ENCODE measurements at regions of chr21 and their contacts with region 1.

Region 1: DNA sequence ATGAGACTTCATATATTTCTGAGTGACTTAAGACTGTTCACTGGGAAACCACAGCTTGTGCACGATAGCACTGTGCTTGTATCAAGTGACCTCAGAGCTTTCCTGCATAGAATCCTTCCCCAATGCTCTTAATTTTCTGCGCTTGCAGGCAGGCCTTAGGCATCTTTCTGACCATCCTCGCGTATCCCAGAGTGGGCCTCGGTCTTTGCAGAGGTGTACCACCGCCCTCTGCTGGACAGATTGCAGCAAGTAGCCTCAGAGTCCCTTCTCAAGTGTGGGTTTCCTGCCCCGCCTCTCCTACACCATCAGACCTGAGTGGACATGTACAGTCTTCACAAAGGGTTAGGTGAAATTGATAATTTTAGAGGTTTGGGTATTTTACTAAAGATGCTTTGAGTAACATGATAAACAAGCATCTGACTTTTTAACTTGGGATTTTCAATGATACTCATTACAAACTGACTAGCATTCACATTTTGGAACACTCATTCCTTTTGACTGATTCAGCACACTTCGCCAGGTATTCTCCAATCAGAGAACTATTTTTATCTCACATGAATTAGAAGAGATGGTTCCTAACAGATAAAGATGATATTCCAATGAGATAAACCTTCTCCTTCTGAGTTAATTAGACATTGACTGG is 246.5 kb upstream of the USP25 start:
- DNase-seq: peak; percentile 88
- H3K4me3 Mint-ChIP-seq: no peak overlapping the region
- H3K27ac Mint-ChIP-seq: no peak overlapping the region
- H3K4me1 Mint-ChIP-seq: no peaks in the 10 kb centered on the region
- H3K27me3 Mint-ChIP-seq: no peaks in the 10 kb centered on the region
- CTCF ChIP-seq: peak; percentile 96

Region 2: DNA sequence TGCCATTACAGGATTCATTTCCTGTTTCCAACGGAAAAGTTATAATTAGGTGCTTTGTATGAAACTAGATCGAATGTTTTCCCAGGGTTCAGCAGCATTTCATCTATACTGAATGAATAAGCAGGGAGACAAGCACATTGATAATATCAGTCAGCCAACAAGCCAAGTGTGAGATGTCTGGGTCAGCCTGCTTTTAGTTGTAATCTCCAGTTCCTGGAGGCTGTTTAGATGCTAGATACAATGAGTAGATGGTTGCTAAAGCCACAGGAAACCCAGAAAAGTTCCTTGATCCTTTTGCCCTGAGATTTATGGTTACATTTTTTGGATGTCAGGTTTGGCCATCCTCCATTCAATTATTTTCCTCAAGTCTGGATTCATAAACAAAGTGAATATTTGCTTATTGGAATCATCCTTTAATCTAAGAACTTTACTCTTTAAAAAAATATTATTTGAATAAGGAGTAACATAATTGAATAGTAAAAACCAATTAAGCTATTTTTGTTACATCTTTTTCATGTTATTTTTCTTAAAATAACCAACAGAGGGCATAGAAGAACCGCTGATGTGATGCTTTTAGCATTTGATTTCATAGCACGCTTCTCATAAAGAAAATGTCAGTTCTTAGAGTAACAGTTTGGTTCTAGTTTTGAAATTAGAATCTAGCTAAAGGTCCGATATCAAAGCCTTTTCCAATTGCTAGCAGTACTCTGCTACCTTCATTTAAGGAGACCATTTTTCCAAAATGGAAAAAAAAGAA is 1176.9 kb before region 1 on chr21:
- CTCF ChIA-PET with region 1: interaction called, 4 read pairs
- POLR2A ChIA-PET with region 1: interaction called, 3 read pairs
- intact Hi-C with region 1: loop called (anchors 10 kb)
- DNase-seq: peak; percentile 46
- H3K4me3 Mint-ChIP-seq: no peak overlapping the region
- H3K27ac Mint-ChIP-seq: no peak overlapping the region
- H3K4me1 Mint-ChIP-seq: peaks cover 8% of the 10 kb centered on the region
- H3K27me3 Mint-ChIP-seq: no peaks in the 10 kb centered on the region
- CTCF ChIP-seq: peak; percentile 55

Region 3: DNA sequence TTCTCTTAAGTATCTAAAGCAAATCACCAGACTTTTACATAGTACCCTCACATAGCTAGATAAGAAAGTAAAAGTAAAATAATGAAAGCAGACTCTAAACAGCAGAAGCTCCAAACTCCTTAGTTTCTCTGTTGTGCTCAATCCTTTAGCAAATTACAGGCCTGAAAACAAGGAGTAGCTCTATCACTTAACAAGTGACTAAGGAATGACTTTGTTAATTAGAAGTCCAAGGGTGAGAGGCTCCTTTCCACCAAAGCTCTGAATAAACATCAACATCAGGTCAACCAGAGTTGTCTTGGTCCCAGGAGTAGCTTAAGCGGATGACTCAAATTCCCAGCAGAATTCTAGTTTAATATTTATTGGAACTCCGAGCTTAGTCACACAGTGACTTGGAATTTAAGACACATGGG is 424.4 kb before region 1 on chr21:
- CTCF ChIA-PET with region 1: interaction called, 12 read pairs
- POLR2A ChIA-PET with region 1: interaction called, 13 read pairs
- intact Hi-C with region 1: loop called (anchors 1 kb)
- DNase-seq: peak; percentile 47
- H3K4me3 Mint-ChIP-seq: peak overlapping the region; percentile 7
- H3K27ac Mint-ChIP-seq: no peak overlapping the region
- H3K4me1 Mint-ChIP-seq: peaks cover 45% of the 10 kb centered on the region
- H3K27me3 Mint-ChIP-seq: no peaks in the 10 kb centered on the region
- CTCF ChIP-seq: no peak

Region 4: DNA sequence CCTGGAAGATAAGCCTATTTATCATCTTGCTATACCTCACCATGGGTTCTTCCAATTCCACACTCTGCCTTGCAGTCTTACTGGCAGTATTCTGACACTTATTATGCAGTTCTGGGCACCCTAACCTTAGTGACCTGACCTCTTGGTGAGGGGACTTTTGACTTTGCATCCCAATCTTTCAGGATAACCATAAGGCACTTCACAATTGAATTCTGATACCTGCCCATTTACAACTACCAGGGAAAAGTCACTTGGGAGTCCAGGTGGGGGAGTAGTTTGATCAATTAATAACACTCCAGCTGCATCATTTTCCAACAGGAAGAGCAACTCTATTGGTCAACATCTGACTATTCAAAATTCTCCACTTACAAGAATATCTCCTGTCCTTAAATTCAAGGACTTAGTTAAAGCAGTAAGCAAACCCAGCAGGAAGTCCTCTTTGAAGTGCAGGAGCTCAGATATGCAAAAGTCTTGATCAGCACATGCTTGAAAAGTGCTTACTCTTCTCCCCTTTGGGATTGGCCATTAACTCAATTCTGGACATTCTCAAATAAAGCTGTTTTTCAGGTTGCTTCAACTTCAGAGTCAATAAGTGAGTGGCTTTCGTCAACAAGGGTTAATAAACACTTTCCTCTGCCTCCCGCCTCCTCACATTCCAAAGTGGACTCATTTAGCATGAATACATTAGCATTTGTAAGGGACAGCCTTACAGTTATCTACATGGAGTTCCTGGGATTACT is 241.1 kb before region 1 on chr21:
- CTCF ChIA-PET with region 1: interaction called, 15 read pairs
- POLR2A ChIA-PET with region 1: no interaction called
- intact Hi-C with region 1: loop called (anchors 1 kb)
- DNase-seq: peak; percentile 21
- H3K4me3 Mint-ChIP-seq: no peak overlapping the region
- H3K27ac Mint-ChIP-seq: no peak overlapping the region
- H3K4me1 Mint-ChIP-seq: peaks cover 11% of the 10 kb centered on the region
- H3K27me3 Mint-ChIP-seq: no peaks in the 10 kb centered on the region
- CTCF ChIP-seq: no peak

Region 5: GRCh38 chr21:15604424-15604823 is 121.2 kb after region 1 on chr21:
- CTCF ChIA-PET with region 1: no interaction called
- POLR2A ChIA-PET with region 1: no interaction called
- intact Hi-C with region 1: no loop called
- DNase-seq: peak; percentile 91
- H3K4me3 Mint-ChIP-seq: no peak overlapping the region
- H3K27ac Mint-ChIP-seq: peak overlapping the region; percentile 82
- H3K4me1 Mint-ChIP-seq: peaks cover 11% of the 10 kb centered on the region
- H3K27me3 Mint-ChIP-seq: no peaks in the 10 kb centered on the region
- CTCF ChIP-seq: no peak

Region 6: DNA sequence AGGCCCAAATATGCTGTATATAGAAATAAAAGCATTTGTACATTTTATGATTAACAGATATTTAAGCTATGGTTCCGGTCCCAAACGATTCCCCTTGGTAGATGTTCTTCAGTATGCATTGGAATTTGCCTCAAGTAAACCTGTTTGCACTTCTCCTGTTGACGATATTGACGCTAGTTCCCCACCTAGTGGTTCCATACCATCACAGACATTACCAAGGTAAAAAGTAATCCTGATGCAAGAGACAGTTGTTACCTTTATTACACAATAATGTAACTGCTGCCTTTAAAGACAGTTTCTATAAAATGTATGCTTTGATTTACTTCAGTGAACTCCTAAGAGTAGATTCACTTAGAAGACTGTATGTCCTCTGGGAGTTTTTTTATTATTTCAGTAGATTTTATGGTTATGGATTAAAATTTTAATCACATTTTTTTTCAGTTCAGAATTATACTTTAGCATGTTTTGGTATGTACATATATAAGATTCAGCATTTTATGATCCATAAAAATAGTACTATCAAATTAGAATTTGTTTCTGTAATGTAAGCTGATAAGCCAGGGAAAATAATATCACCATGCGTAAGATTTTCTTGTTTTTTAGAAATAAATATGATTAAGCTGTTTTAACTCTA is 343.0 kb after region 1 on chr21:
- CTCF ChIA-PET with region 1: no interaction called
- POLR2A ChIA-PET with region 1: no interaction called
- intact Hi-C with region 1: loop called (anchors 1 kb)
- DNase-seq: peak; percentile 83
- H3K4me3 Mint-ChIP-seq: no peak overlapping the region
- H3K27ac Mint-ChIP-seq: no peak overlapping the region
- H3K4me1 Mint-ChIP-seq: peaks cover 6% of the 10 kb centered on the region
- H3K27me3 Mint-ChIP-seq: no peaks in the 10 kb centered on the region
- CTCF ChIP-seq: peak; percentile 60

Region 7: DNA sequence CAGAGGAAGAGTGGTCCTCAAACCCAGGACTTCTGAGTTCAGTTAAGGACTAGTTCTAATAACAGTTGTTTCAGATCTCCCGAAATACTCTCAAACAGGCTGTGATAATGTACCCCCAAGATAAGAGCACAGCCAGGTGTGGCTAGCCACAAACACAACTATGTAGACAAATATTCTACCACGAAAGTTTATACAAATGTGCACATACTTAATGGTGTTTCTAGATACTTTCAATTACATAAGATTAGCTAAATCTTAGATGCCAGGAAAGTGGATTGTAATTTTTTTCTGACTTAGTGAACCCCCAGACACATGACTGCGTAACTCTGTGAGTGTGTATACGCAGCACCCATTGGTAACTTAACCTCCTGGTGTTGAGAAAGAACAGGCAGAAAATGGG is 516.5 kb after region 1 on chr21:
- CTCF ChIA-PET with region 1: no interaction called
- POLR2A ChIA-PET with region 1: no interaction called
- intact Hi-C with region 1: no loop called
- DNase-seq: no peak
- H3K4me3 Mint-ChIP-seq: no peak overlapping the region
- H3K27ac Mint-ChIP-seq: no peak overlapping the region
- H3K4me1 Mint-ChIP-seq: no peaks in the 10 kb centered on the region
- H3K27me3 Mint-ChIP-seq: no peaks in the 10 kb centered on the region
- CTCF ChIP-seq: no peak